Activated naive CD4-positive, alpha-beta T cell treated with anti-CD3 and anti-CD28 coated beads for 36 hours (primary cell): ENCODE measurements at regions of chr7 and their contacts with region 1.

Region 1: DNA sequence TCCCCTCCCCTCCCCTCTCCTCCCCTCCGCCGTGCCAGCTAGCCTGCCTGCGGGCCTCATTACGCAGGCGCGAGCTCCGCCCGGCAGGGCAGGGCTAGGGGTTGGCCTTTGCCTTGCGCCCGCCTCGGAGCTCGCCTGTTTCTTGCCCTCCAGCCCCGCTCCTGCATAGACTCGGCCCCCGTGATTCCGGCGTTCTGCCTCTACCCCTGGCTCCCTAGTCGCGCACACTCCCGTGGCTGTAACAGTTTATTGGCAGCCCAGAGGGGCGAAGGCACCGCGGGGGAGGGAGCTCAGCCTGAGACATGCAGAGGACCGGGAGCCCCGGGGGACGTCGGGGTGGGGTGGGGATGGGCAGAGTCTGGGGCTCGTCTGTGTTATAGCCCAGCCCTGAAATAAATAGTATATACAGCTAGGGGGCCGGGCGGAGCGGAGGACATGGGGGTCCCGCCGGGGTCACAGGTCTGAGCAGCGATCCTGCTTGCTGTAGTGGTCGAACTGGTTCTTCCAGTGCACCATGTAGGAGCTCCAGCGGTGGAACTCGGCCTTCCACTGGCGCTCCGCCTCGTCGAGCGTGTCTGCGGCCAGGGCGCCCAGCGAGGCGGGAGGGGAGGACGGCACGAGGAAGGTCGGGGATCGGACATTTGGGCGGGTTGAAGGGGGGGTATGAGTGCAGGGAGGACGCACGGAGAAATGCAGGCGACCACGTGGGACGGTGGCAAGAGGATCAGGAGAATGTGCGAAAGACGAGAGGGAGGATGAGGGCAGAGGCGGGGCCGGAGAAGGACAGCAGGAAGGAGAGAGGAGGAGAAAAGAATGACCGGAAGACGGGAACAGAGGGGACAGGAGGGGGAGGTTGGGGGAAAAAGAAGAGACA is 483 bp upstream of the UFSP1 start:
- DNase-seq: peak; percentile 92
- H3K4me3 Mint-ChIP-seq: peak overlapping the region; percentile 85
- H3K27ac Mint-ChIP-seq: no peak overlapping the region
- H3K4me1 Mint-ChIP-seq: peaks cover 42% of the 10 kb centered on the region
- H3K27me3 Mint-ChIP-seq: peaks cover 18% of the 10 kb centered on the region

Region 2: GRCh38 chr7:100221231-100221718 is 668.7 kb before region 1 on chr7:
- CTCF ChIA-PET with region 1: no interaction called
- intact Hi-C with region 1: no loop called
- DNase-seq: peak; percentile 93
- H3K4me3 Mint-ChIP-seq: peak overlapping the region; percentile 97
- H3K27ac Mint-ChIP-seq: peak overlapping the region; percentile 98
- H3K4me1 Mint-ChIP-seq: peaks cover 57% of the 10 kb centered on the region
- H3K27me3 Mint-ChIP-seq: no peaks in the 10 kb centered on the region

Region 3: GRCh38 chr7:100874577-100875355 is 15.2 kb before region 1 on chr7 and contains the start of gene SRRT:
- CTCF ChIA-PET with region 1: interaction called, 11 read pairs
- intact Hi-C with region 1: loop called (anchors 1 kb)
- DNase-seq: peak; percentile 99
- H3K4me3 Mint-ChIP-seq: peak within 1 kb of the TSS; percentile 97
- H3K27ac Mint-ChIP-seq: peak within 1 kb of the TSS; percentile 98
- H3K4me1 Mint-ChIP-seq: peaks cover 44% of the 10 kb centered on the region
- H3K27me3 Mint-ChIP-seq: no peaks in the 10 kb centered on the region
- total RNA-seq, gene SRRT: 166 to 169 TPM

Region 4: GRCh38 chr7:101058355-101058754 is 168.4 kb after region 1 on chr7:
- CTCF ChIA-PET with region 1: interaction called, 20 read pairs
- intact Hi-C with region 1: loop called (anchors 1 kb)
- DNase-seq: peak; percentile 68
- H3K4me3 Mint-ChIP-seq: no peak overlapping the region
- H3K27ac Mint-ChIP-seq: no peak overlapping the region
- H3K4me1 Mint-ChIP-seq: peaks cover 4% of the 10 kb centered on the region
- H3K27me3 Mint-ChIP-seq: peaks cover 32% of the 10 kb centered on the region

Region 5: GRCh38 chr7:101165075-101165957 is 275.3 kb after region 1 on chr7 and contains the start of gene VGF:
- CTCF ChIA-PET with region 1: interaction called, 3 read pairs
- intact Hi-C with region 1: loop called (anchors 10 kb)
- DNase-seq: peak; percentile 95
- H3K4me3 Mint-ChIP-seq: peak within 1 kb of the TSS; percentile 77
- H3K27ac Mint-ChIP-seq: no peak within 1 kb of the TSS
- H3K4me1 Mint-ChIP-seq: peaks cover 58% of the 10 kb centered on the region
- H3K27me3 Mint-ChIP-seq: peaks cover 58% of the 10 kb centered on the region
- total RNA-seq, gene VGF: not detected